Cardiac septum (tissue), 1 donor: ENCODE measurements at regions of chr1 and their contacts with region 1.

Region 1: DNA sequence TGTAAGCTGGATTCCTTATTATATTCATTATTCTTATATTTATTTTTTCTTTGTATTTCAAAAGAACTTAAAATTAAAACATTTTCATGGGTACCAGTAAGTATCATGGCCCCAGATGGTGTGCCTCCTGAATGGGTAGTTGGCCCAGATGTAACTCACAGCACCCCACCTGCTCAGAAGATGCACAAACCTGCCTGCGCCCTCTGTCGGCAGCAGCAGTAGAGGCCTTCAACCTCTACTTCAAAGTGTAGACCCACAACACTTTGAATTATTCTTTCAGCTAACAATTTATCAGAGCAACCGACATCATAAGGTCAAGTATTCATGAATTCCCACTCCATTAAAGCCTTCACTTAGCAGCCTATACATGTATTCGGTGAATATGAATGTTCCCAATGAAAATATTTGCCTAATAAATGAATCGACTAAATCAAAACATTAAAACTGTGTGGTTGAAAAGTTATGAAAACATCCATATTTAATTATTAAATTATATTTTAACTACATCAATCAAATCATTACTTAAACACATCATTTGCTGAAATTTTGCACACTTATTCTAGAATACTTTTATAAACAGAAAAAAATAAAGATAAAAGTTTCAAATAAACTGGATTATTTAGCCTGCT is 25.4 kb downstream of the PIGM start:
- DNase-seq: no peak

Region 2: GRCh38 chr1:159936273-159936904 is 70.0 kb before region 1 on chr1:
- intact Hi-C with region 1: loop called (anchors 1 kb)
- DNase-seq: peak; percentile 90

Region 3: DNA sequence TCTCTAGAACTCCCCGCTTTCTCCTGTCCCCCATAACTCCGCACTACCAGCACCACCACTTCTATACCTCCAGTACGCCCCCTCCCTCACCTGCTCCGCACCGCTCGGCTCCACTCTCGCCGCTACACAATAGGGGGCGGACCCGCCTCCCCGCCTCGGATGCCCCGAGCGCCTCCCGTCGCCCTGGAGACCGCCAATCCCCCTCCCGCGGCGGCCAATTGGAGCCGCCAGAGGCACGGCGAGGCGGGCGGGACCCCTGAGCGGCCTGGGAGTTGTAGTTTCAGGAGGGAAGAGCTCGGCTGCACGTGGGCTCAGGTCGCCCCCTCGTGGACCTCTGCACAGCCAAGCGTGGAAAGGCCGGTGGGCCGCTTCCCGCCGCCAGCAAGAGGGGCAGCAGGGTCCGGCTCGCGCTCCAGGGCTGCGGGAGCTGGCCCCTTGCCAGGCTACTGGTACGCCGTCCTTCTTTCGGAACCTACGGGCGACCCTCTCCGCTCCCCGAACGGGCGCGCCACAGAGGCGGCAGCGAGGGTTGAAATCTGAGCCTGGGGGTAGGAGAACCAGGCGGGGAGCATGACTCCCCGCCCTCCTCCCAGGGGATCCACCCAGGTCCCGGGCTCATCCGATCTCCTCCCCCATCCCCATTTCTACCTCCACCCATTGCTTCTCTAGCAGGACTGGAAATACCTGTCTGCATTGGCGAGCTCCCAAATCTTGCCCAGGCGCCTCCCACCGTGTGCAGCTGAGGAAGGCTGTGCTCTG is 60.8 kb before region 1 on chr1 and contains the start of gene IGSF9:
- intact Hi-C with region 1: loop called (anchors 2 kb)
- DNase-seq: peak; percentile 87
- total RNA-seq, gene IGSF9: not detected

Region 4: DNA sequence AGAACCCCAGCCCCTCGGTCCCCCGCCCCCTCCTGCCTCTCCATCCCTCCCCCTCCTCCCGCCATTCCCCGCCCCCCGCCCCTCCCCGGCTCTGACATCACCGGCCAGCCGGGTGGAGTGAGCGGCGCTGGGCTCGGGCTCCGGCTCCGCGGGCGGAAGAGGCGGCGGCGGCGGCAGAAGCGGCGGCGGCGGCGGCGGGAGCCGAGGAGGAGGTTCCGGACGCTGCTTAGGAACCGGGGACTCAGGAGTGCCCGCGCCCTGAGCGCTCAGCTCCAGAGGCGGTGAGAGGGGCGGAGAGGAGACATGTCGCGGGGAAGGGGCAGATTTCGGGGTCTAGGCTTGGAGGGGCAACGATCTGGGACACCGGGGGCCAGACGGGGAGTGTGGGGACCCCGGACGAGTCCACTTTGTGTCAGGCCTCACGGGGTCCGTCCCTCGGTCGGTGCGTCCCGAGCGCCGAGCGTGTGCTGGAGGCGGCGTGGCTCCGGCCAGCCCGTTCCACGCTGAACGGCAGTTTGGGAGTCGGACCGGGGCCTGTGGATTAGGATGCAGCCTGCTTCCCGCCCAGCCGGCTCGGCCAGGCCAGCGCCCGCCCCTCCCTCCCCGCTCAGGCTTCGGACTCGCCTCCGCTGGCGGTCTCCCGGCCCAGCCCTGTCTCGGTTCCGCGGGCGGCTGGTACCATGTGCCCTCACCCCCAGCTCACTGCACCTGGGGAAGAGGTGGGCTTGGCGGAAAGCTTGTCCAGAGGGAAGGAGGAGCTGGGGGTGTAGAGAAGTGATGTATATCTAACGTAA is 199.0 kb after region 1 on chr1 and contains the start of gene PEA15:
- intact Hi-C with region 1: no loop called
- DNase-seq: peak; percentile 84
- total RNA-seq, gene PEA15: 317 TPM